AG04450 (cell line): ENCODE measurements at regions of chr9 and their contacts with region 1.

Region 1: DNA sequence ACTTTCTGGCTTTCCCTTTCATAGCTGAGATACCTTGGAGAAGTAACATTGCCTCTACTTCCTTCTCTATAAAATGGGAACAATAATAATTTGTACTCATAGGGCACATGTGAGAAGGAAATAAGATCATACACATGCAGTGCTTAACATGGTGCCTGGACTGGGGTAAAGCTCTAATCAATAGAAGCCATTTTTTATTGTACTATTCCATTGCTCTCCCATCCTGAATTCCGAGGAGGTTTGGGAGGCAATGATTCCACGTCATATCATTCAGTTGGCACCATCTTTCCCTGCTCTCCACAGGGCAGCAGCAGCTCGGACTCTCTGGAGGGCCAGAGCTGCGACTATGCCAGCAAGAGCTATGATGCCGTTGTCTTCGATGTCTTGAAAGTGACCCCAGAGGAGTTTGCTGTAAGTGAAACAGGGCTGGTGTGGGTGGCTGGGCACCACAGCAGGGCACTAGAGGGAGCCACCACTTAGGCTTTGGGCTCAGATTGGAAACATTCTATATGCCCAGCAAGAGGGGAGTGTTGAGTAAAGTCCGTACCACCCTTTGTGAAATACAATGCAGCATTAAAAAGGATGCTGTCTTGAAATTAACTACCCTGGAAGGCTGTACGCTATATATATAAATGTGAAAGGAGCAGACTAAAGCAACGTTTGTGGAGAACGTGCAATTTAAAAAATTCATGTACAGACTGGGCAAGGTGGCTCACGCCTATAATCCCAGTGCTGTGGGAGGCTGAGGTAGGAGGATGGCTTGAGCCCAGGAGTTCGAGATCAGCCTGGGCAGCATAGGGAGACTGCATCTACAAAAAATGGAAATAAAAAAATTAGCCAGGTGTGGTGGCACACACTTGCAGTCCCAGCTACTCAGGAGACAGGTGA is 51.2 kb downstream of the RALGPS1 start:
- DNase-seq: peak; percentile 21
- H3K4me3 ChIP-seq: no peak overlapping the region
- H3K27ac ChIP-seq: no peak overlapping the region
- H3K27me3 ChIP-seq: no peaks in the 10 kb centered on the region
- CTCF ChIP-seq: peak; percentile 95

Region 2: GRCh38 chr9:126874546-126875311 is 91.1 kb before region 1 on chr9:
- CTCF ChIA-PET with region 1: no interaction called
- POLR2A ChIA-PET with region 1: no interaction called
- DNase-seq: no peak
- H3K4me3 ChIP-seq: no peak overlapping the region
- H3K27ac ChIP-seq: no peak overlapping the region
- H3K27me3 ChIP-seq: no peaks in the 10 kb centered on the region
- CTCF ChIP-seq: no peak

Region 3: DNA sequence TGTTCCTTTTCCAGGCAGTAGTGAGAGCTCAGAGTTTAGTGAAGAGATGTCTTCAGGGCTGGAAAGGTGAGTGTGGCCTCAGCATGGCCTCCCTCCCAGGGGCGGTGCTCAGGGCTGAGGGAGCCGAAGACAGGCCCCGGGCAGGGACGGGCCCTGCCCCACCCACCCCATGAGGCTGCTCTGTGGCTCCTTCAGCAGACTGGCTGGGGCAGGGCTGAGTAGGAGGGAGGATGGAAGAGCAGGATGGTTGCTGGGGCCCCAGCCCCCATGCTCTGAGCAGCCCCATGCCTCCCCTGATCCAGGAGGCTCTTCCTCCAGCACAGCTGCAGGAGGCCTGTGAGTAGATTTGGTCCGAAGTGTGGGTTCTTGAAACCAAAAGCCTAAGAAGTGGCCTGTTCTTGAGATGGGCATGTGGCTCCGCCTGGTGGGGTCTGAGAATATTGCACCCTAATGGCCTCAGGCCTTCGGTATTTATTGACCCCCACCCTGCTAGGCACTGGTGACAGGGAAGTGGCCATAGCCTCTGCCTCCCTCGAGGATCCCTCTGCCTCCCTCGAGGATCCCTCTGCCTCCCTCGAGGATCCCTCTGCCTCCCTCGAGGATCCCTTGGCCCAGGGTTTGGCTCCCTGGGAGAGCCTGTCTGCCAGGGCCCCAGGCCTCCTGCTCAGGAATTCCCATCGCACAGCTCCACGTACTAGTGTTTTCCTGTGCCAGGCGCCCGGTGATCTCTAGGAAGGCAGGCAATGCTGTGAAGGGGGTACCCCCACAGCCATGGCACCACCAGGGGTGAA is 233.4 kb after region 1 on chr9:
- CTCF ChIA-PET with region 1: interaction called, 29 read pairs
- POLR2A ChIA-PET with region 1: no interaction called
- DNase-seq: peak; percentile 71
- H3K4me3 ChIP-seq: no peak overlapping the region
- H3K27ac ChIP-seq: no peak overlapping the region
- H3K27me3 ChIP-seq: peaks cover under 1% of the 10 kb centered on the region
- CTCF ChIP-seq: peak; percentile 92